Endothelial cell of umbilical vein (primary cell): ENCODE measurements at regions of chr16 and their contacts with region 1.

Region 1: GRCh38 chr16:2155091-2156021 is at the start of gene TRAF7:
- DNase-seq: peak; percentile 100
- H3K4me3 ChIP-seq: peak within 1 kb of the TSS; percentile 65 to 96 (median 84)
- H3K27ac ChIP-seq: peak within 1 kb of the TSS; percentile 44
- H3K4me1 ChIP-seq: peaks cover 41% of the 10 kb centered on the region
- H3K27me3 ChIP-seq: no peaks in the 10 kb centered on the region
- CTCF ChIP-seq: no peak
- POLR2A ChIP-seq: peak; percentile 100
- total RNA-seq, gene TRAF7: 141 and 159 TPM in 2 replicates

Region 2: DNA sequence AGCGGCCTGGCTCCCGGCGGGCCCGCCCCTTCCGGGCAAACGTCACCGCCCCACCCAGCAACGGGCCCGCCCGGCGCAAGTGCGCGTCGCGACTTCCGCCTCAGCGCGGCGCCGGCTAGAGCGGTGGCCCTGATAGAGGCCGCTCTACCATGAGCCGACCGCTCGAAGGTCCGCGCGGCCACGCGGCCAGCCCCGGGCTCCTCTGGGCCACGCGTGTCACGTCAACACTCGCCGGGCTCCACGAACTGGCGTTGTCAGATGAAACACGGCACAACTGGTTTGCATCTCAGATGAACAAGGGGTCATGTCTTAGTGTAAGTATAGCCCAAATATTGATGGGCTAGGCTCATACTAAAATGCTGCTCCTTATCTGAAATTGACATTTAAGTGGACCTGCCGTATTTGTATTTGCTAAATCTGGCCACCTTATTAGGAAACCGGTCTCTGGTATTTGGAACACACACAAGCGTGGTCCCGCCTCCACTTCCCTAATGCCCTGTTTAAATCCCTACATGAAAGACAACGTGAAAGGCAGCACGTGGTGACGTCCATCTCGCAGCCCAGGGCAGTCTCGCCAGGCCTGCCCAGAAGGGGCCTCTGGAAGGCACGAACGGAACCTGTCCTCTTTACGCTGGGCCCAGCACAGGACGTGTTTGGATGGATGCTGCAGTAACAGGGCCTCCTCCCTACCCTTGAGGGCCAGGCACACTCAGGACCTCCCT is 145.4 kb before region 1 on chr16 and contains the start of gene ZNF598:
- CTCF ChIA-PET with region 1: interaction called, 14 read pairs
- POLR2A ChIA-PET with region 1: interaction called, 3 read pairs
- dilution Hi-C with region 1: no loop called
- intact Hi-C with region 1: loop called (anchors 1 kb)
- DNase-seq: peak; percentile 72
- H3K4me3 ChIP-seq: peak within 1 kb of the TSS; percentile 72 to 85 (median 76)
- H3K27ac ChIP-seq: peak within 1 kb of the TSS; percentile 86
- H3K4me1 ChIP-seq: peaks cover 41% of the 10 kb centered on the region
- H3K27me3 ChIP-seq: no peaks in the 10 kb centered on the region
- CTCF ChIP-seq: no peak
- POLR2A ChIP-seq: peak; percentile 94
- total RNA-seq, gene ZNF598: 60.5 and 67.0 TPM in 2 replicates

Region 3: DNA sequence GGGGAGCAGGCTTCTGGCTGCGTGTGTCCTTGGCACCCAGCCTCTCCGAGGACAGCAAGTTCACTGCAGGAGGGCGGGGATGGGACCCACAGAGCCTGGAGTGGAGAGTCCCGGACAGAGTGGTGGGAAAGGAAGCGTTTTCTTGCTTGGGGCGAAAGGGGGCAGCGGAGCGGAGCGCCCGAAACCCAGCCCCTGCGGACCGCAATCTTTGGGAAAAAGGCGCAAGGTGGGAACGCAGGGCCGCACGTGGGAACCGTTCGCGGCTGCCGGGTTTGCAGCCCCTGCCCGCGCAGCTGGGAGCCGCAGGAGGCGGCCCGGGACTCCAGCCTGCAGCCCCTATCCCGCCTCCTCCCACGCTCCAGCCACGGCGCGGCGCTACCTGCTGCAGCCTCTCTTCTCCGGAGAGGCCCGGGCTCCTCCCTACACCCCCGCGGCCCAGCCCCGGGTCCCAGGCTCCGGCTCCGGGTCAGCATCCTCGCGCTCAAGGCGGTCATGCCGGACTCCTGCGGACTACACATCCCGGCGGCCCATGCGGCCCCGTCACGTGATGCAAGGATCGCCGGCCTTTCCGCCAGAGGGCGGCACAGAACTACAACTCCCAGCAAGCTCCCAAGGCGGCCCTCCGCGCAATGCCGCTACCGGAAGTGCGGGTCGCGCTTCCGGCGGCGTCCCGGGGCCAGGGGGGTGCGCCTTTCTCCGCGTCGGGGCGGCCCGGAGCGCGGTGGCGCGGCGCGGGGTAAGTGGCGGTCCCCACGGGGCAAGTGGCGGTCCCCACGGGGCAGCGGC is 107.8 kb before region 1 on chr16 and contains the starts of genes NTHL1 and TSC2:
- CTCF ChIA-PET with region 1: interaction called, 3 read pairs
- POLR2A ChIA-PET with region 1: interaction called, 8 read pairs
- dilution Hi-C with region 1: loop called (anchors 25 kb)
- intact Hi-C with region 1: loop called (anchors 1 kb)
- DNase-seq: peak; percentile 97
- H3K4me3 ChIP-seq: peak within 1 kb of the TSS; percentile 67 to 82 (median 72)
- H3K27ac ChIP-seq: no peak within 1 kb of the TSS
- H3K4me1 ChIP-seq: peaks cover 35% of the 10 kb centered on the region
- H3K27me3 ChIP-seq: no peaks in the 10 kb centered on the region
- CTCF ChIP-seq: peak in 1 of 2 donors; percentile 35
- POLR2A ChIP-seq: peak; percentile 88
- total RNA-seq, gene NTHL1: 35.3 and 39.8 TPM in 2 replicates
- total RNA-seq, gene TSC2: 144 TPM in 2 replicates

Region 4: DNA sequence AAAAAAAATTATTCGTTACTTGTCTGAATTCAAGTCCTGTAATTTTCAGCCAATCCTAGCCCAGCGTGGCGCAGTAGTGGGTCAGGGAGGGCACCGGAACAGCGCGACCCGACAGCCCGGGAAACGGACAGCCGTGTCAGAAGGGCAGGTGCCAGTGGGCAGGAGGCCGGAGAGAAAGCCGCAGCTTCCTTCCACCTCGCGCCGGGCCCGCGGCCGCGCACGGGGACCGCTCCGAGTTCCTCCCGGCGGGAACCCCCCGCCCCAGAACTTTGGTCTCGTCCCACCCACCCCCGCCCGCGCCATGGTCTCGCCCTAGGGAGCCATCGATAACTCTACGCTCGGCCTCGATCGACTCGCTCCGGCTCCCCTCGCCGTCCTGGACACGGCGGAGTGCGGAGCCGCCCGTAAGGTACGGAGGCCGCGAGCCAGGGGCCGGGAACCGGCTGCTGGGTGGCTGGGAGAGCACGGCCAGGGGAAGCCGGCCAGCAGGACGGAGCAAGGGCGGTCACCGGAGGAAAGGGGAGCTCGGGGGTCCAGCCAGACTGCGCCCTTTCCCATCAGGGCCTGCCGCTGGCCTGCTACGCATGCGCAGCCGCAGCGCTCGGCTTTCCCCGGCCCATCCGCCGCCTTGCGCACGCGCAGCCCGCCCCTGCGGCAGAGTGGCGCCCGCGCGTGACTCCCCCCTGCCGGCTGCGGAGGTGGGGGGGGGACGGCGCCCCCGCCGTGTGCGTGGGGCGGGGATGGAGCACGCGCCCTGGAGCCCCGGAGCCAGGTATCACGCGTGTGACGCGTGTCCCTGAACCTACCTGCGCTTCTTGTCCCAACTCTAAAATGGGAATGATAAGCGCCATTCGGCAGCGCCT is 50.0 kb after region 1 on chr16 and contains the start of gene MLST8:
- CTCF ChIA-PET with region 1: interaction called, 4 read pairs
- POLR2A ChIA-PET with region 1: interaction called, 9 read pairs
- dilution Hi-C with region 1: no loop called
- intact Hi-C with region 1: loop called (anchors 1 kb)
- DNase-seq: peak; percentile 87
- H3K4me3 ChIP-seq: peak within 1 kb of the TSS; percentile 58 to 91 (median 73)
- H3K27ac ChIP-seq: peak within 1 kb of the TSS; percentile 76
- H3K4me1 ChIP-seq: peaks cover 10% of the 10 kb centered on the region
- H3K27me3 ChIP-seq: peaks cover under 1 to 2% of the 10 kb centered on the region in 2 experiments
- CTCF ChIP-seq: peak in 1 of 2 donors; percentile 25
- POLR2A ChIP-seq: peak; percentile 89
- total RNA-seq, gene MLST8: 36.9 and 37.0 TPM in 2 replicates

Region 5: DNA sequence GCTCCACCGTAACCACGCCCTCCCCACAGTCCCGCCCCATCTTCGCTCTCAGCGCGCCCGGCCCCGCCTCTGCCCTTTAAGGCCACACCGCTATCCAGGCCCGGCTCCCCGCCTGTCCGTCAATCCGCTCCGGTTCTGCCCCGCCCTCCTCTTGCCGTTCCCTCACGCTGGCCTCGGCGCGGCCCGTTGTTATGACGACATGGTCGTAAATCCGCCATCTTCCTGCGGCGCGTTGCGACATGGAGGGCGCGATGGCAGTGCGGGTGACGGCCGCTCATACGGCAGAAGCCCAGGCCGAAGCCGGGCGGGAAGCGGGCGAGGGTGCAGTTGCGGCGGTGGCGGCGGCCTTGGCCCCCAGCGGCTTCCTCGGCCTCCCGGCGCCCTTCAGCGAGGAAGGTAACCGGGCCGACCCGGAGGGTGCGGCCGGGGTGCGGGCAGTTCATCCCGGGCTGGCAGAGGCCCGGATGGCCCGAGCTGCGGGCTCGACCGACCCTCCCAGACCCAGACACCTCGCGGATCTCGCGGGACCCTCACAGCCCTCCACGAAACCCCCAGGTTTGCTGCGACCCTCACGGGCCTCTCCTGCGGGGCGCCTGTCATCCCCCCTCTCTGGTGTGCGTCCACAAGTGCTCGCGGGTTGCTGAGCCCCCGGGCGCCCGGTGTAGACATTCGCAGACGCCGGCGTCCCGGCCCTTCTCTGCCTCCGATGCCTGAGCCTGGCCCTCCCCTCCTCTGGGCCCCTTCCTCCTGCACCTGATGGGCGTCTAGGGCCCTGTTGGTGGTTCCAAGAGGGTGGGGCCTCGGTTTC is 68.2 kb after region 1 on chr16 and contains the start of gene E4F1:
- CTCF ChIA-PET with region 1: no interaction called
- POLR2A ChIA-PET with region 1: interaction called, 3 read pairs
- dilution Hi-C with region 1: no loop called
- intact Hi-C with region 1: loop called (anchors 2 kb)
- DNase-seq: peak; percentile 99
- H3K4me3 ChIP-seq: peak within 1 kb of the TSS; percentile 54 to 79 (median 74)
- H3K27ac ChIP-seq: peak within 1 kb of the TSS; percentile 41
- H3K4me1 ChIP-seq: peaks cover 7% of the 10 kb centered on the region
- H3K27me3 ChIP-seq: no peaks in the 10 kb centered on the region
- CTCF ChIP-seq: no peak
- POLR2A ChIP-seq: peak; percentile 96
- total RNA-seq, gene E4F1: 31.9 and 32.7 TPM in 2 replicates

Region 6: DNA sequence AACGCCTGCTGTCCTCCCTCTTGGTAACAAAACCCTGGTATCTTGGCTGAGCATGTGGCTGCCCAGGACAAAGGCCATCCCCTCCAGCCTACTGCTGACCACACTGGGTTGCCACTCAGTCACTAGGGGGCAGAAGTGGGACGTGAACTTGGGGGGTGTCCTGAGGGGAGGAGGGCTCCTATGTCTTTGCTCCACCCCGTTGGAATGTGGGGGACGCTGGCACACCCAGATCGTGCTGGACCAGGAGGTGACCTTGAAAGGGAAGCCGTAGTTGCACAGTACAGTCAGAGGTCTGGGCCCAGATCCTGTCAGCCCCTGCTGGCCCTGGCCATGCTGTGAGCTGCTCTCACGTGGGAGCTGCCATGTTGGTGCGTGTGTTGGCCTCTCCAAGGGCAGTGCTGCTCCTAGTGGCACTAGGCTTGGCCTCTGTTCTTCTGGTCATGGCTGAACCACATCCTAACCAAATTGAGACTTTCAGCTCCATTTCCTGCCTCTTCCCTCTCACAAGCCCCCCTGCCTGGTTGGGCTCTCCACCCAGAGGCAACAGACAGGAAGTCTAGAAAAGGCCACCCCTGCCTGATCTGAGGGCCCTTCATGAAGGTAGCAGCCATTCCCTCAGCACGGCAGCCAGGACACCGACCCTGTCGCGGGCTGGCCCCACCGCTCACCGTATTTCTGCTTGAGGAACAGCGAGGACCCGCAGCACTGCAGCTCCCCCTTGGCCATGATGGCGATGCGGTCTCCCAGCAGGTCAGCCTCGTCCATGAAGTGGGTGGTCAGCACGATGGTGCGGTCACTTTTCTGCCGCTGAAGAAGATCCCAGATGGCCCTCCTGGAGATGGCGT is 141.5 kb after region 1 on chr16:
- CTCF ChIA-PET with region 1: no interaction called
- POLR2A ChIA-PET with region 1: no interaction called
- dilution Hi-C with region 1: no loop called
- intact Hi-C with region 1: no loop called
- DNase-seq: peak; percentile 31
- H3K4me3 ChIP-seq: no peak overlapping the region
- H3K27ac ChIP-seq: no peak overlapping the region
- H3K4me1 ChIP-seq: no peaks in the 10 kb centered on the region
- H3K27me3 ChIP-seq: no peaks in the 10 kb centered on the region
- CTCF ChIP-seq: peak; percentile 42 to 44
- POLR2A ChIP-seq: no peak